ENCODE measurements at regions of chr16 and their contacts with region 1.

Region 1: DNA sequence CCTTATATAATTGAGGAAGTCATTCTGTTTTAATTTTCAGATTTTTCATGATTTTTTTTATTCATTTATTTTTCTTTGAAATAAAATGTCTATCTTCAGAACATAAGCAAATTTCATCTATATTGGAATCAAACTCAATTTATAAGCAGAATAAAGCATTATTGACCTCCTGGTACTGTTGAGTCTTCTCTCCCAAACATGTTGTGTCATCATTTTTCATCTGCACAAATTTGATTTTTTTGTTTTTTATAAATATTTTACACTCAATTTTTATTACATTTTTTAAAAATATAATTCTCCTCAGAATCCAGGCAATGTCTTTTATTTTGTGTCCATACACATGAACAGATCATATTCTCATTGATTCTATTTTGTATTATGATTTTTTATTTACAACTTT is 2363.9 kb downstream of the TP53TG3F start:
- DNase-seq: no peak
- ATAC-seq: no peak
- H3K4me3 ChIP-seq: no peak overlapping the region
- H3K27ac ChIP-seq: no peak overlapping the region
- H3K4me1 ChIP-seq: no peaks in the 10 kb centered on the region
- H3K27me3 ChIP-seq: no peaks in the 10 kb centered on the region
- CTCF ChIP-seq: no peak
- EP300 ChIP-seq: no peak
- POLR2A ChIP-seq: no peak
- RAD21 ChIP-seq: no peak

Region 2: GRCh38 chr16:35841632-35842031 is 18.3 kb after region 1 on chr16:
- CTCF ChIA-PET with region 1: no interaction called
- POLR2A ChIA-PET with region 1: no interaction called
- in situ Hi-C with region 1: no loop called
- intact Hi-C with region 1: no loop called
- DNase-seq: no peak
- ATAC-seq: no peak
- H3K4me3 ChIP-seq: no peak overlapping the region
- H3K27ac ChIP-seq: no peak overlapping the region
- H3K4me1 ChIP-seq: no peaks in the 10 kb centered on the region
- H3K27me3 ChIP-seq: no peaks in the 10 kb centered on the region
- CTCF ChIP-seq: no peak
- EP300 ChIP-seq: no peak
- POLR2A ChIP-seq: no peak
- RAD21 ChIP-seq: no peak

Region 3: GRCh38 chr16:35873472-35873871 is 50.1 kb after region 1 on chr16:
- CTCF ChIA-PET with region 1: no interaction called
- POLR2A ChIA-PET with region 1: no interaction called
- in situ Hi-C with region 1: no loop called
- intact Hi-C with region 1: loop called (anchors 10 kb)
- DNase-seq: no peak
- ATAC-seq: no peak
- H3K4me3 ChIP-seq: no peak overlapping the region
- H3K27ac ChIP-seq: no peak overlapping the region
- H3K4me1 ChIP-seq: no peaks in the 10 kb centered on the region
- H3K27me3 ChIP-seq: no peaks in the 10 kb centered on the region
- CTCF ChIP-seq: no peak
- EP300 ChIP-seq: no peak
- POLR2A ChIP-seq: no peak
- RAD21 ChIP-seq: no peak

Region 4: GRCh38 chr16:35931722-35932121 is 108.4 kb after region 1 on chr16:
- CTCF ChIA-PET with region 1: no interaction called
- POLR2A ChIA-PET with region 1: no interaction called
- in situ Hi-C with region 1: no loop called
- intact Hi-C with region 1: no loop called
- DNase-seq: no peak
- ATAC-seq: no peak
- H3K4me3 ChIP-seq: no peak overlapping the region
- H3K27ac ChIP-seq: no peak overlapping the region
- H3K4me1 ChIP-seq: no peaks in the 10 kb centered on the region
- H3K27me3 ChIP-seq: no peaks in the 10 kb centered on the region
- CTCF ChIP-seq: no peak
- EP300 ChIP-seq: no peak
- POLR2A ChIP-seq: no peak
- RAD21 ChIP-seq: no peak